Activated CD4-positive, alpha-beta T cell treated with anti-CD3 and anti-CD28 coated beads for 36 hours (primary cell): ENCODE measurements at regions of chr11 and their contacts with region 1.

Region 1: GRCh38 chr11:6646918-6647679 is 8.5 kb downstream of the DCHS1 start:
- DNase-seq: peak; percentile 43
- ATAC-seq: peak; percentile 54
- H3K4me3 Mint-ChIP-seq: no peak overlapping the region
- H3K27ac Mint-ChIP-seq: no peak overlapping the region
- H3K4me1 Mint-ChIP-seq: no peaks in the 10 kb centered on the region
- H3K27me3 Mint-ChIP-seq: no peaks in the 10 kb centered on the region

Region 2: GRCh38 chr11:6619004-6619745 is 27.9 kb before region 1 on chr11 and contains the start of gene TPP1:
- CTCF ChIA-PET with region 1: interaction called, 6 read pairs
- POLR2A ChIA-PET with region 1: no interaction called
- intact Hi-C with region 1: loop called in 1 of 2 experiments (anchors 1 kb)
- DNase-seq: peak; percentile 91
- ATAC-seq: peak; percentile 93
- H3K4me3 Mint-ChIP-seq: no peak within 1 kb of the TSS
- H3K27ac Mint-ChIP-seq: no peak within 1 kb of the TSS
- H3K4me1 Mint-ChIP-seq: peaks cover 8% of the 10 kb centered on the region
- H3K27me3 Mint-ChIP-seq: no peaks in the 10 kb centered on the region
- total RNA-seq, gene TPP1: 38.1 to 47.9 TPM

Region 3: GRCh38 chr11:6778518-6778917 is 131.4 kb after region 1 on chr11:
- CTCF ChIA-PET with region 1: no interaction called
- POLR2A ChIA-PET with region 1: no interaction called
- intact Hi-C with region 1: no loop called
- DNase-seq: no peak
- ATAC-seq: no peak
- H3K4me3 Mint-ChIP-seq: no peak overlapping the region
- H3K27ac Mint-ChIP-seq: no peak overlapping the region
- H3K4me1 Mint-ChIP-seq: no peaks in the 10 kb centered on the region
- H3K27me3 Mint-ChIP-seq: peaks cover 8% of the 10 kb centered on the region